ENCODE measurements at regions of chr11 and their contacts with region 1.

Region 1: DNA sequence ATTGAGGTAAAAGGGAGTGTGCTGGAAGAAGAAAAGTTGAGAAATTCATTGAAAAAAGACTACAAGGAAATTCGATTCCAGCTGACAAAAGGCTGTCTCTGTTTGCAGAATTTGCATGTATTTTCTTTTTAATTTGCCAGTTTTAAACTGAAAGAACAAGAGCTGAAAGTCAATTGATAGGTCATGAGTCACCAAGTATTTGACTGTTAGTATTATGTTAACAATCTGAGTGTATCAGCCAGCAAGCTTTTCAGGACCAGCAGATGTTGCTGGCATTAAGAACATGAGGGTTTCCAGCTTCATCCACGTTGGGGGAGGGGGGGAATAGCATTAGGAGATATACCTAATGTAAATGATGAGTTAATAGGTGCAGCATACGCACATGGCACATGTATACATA is 726.7 kb downstream of the METTL15 start:
- DNase-seq: peak; percentile 79
- H3K4me3 ChIP-seq: no peak overlapping the region
- H3K27ac ChIP-seq: peak overlapping the region; percentile 85
- H3K27me3 ChIP-seq: no peaks in the 10 kb centered on the region
- CTCF ChIP-seq: no peak

Region 2: GRCh38 chr11:28756977-28757376 is 77.9 kb before region 1 on chr11:
- CTCF ChIA-PET with region 1: no interaction called
- POLR2A ChIA-PET with region 1: interaction called, 20 read pairs
- DNase-seq: peak; percentile 56
- H3K4me3 ChIP-seq: no peak overlapping the region
- H3K27ac ChIP-seq: peak overlapping the region; percentile 86
- H3K27me3 ChIP-seq: no peaks in the 10 kb centered on the region
- CTCF ChIP-seq: no peak

Region 3: DNA sequence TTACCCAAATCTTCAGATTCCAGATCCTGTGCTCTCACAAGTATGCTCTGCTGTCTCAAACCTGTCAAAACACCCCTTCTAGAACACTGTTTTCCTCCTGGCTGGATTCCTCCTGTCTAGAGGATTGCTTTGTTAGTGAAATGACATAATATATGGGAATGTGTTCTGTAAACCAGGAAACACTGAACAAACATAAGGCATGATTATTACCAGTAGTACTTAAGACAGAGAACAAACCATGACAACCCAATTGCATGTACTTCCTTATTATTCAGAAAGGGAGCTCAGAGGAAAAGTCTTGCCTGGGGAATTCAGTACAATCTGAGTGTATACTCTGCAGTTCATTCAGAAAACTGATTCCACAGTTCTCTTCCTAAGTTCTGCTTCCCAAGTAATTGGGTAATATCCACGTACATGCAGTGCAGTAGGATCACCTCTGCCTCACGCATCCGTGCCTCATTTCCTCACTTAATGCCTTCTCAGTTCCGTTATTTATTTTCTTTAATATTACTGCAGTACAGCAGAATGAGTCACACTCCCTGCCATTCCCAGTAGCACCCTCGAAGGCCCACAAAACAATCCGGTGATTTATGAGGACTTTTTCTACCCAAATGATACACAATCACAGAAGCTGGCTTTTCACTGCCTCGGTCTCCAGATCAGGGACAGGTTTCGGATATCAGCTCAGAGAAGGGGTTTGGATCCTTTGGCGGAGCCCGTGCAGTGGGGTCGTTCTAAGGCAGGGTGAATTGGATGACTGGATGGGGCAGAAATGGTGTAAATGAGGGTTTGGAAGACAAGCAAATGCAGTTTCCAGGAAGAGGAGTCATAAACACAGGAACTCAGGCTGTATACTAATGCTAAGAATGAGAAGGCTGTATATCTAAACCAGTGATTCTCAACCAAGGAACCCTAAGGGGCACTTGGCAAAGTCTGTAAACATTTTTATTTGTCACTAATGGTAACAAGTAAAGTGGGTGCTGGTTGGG is 285.1 kb after region 1 on chr11:
- CTCF ChIA-PET with region 1: no interaction called
- POLR2A ChIA-PET with region 1: interaction called, 12 read pairs
- DNase-seq: peak; percentile 90
- H3K4me3 ChIP-seq: peak overlapping the region; percentile 10
- H3K27ac ChIP-seq: peak overlapping the region; percentile 89
- H3K27me3 ChIP-seq: no peaks in the 10 kb centered on the region
- CTCF ChIP-seq: no peak

Measured in AG04450 (cell line).